Keratinocyte (primary cell): ENCODE measurements at regions of chr5 and their contacts with region 1.

Region 1: GRCh38 chr5:154478224-154478565 is at the start of gene HAND1:
- DNase-seq: no peak
- H3K4me3 ChIP-seq: peak within 1 kb of the TSS; percentile 3 to 30 (median 13)
- H3K27ac ChIP-seq: no peak within 1 kb of the TSS
- H3K4me1 ChIP-seq: peaks cover 2% of the 10 kb centered on the region
- H3K27me3 ChIP-seq: peaks cover 99% of the 10 kb centered on the region
- CTCF ChIP-seq: no peak
- polyA plus RNA-seq, gene HAND1: not detected in 3 replicates

Region 2: DNA sequence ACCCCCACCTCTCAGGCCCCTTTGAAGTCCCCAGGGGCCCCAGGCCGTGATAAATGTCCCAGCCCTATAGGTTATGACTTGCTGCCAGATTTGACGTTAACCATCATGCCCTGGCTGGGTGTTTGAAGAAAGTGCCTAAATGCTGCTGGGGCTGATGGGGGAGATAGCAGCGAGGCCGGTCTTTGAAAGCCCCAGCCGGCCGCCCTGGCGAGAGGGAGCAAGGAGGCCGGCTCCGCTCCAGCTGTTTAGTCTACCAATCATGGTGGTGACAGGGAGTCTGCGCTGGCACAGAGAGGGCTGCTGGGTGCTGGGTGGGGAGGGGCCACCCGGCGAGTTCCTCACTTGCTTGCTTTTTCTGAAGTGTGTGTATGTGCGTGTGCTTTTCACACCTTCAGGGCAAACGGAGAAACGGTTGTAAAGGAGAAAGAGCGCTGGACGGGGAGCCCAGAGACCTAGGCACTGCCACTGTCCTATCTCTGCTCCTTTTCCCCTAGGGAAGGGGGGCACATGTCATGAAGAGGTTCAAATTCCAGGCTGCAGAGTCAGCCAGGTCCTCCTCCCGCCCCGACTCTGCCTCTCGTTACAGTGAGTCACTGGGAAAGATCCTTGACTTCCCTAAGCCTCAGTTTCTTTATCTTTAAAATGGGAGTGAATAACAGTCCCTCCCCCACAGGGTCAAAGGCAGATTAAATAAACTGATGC is 125.9 kb after region 1 on chr5:
- dilution Hi-C with region 1: loop called (anchors 10 kb)
- DNase-seq: no peak
- H3K4me3 ChIP-seq: no peak overlapping the region
- H3K27ac ChIP-seq: no peak overlapping the region
- H3K4me1 ChIP-seq: no peaks in the 10 kb centered on the region
- H3K27me3 ChIP-seq: peaks cover 3% of the 10 kb centered on the region
- CTCF ChIP-seq: no peak